ENCODE measurements at regions of chr9 and their contacts with region 1.

Region 1: DNA sequence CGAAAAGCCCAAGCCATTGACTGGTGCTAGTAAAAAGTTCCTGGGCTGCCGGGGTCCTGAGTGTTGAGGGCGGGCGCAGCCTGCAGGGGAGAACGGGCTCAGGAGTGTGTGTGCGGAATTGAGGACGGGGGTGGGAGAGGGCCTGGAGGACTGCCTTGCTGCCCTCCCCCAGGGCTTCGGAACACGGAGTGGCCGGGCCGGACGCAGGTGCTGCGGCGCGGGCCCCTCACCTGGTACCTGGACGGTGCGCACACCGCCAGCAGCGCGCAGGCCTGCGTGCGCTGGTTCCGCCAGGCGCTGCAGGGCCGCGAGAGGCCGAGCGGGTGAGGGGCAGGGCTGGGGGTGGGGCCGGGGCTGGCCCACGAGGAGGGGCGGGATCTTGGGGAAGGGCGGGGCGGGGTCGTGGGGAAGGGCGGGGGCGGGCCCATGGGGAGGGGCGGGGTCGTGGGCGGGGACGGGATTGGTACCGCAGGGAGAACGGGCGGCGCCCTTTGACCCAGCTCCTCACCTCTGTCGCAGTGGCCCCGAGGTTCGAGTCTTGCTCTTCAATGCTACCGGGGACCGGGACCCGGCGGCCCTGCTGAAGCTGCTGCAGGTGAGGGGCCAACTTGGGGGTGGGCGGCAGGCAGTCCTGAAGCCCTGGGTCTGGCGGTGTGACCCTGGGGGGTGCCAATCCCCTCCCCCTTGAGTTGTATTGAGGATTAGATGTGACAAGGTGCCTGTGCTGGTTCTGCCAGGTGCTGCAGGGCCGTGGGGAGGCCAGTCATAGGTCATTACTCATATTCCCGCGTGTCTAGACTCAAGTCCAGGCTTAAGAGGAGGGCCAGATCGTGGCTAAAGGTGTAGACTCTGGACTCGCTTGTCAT is 7.1 kb downstream of the FPGS start:
- DNase-seq: peak; percentile 75 to 86 (median 84)
- ATAC-seq: peak; percentile 69 to 88 (median 83)
- H3K4me3 ChIP-seq: peak overlapping the region in 2 of 3 donors; percentile 38 to 39
- H3K27ac ChIP-seq: peak overlapping the region in 2 of 3 donors; percentile 10 to 62
- H3K4me1 ChIP-seq: peaks cover 0 to 22% (median 9%) of the 10 kb centered on the region in 4 donors
- H3K27me3 ChIP-seq: no peaks in the 10 kb centered on the region
- CTCF ChIP-seq: no peak
- POLR2A ChIP-seq: peak; percentile 11

Region 2: GRCh38 chr9:127869310-127870152 is 59.8 kb after region 1 on chr9:
- intact Hi-C with region 1: loop called in 1 of 2 experiments (anchors 10 kb)
- DNase-seq: peak; percentile 86 to 91 (median 90)
- ATAC-seq: peak; percentile 83 to 92 (median 86)
- H3K4me3 ChIP-seq: no peak overlapping the region
- H3K27ac ChIP-seq: no peak overlapping the region
- H3K4me1 ChIP-seq: peaks cover 0 to 13% (median 6%) of the 10 kb centered on the region in 4 donors
- H3K27me3 ChIP-seq: no peaks in the 10 kb centered on the region
- CTCF ChIP-seq: peak; percentile 83 to 94 (median 86)
- POLR2A ChIP-seq: no peak

Region 3: DNA sequence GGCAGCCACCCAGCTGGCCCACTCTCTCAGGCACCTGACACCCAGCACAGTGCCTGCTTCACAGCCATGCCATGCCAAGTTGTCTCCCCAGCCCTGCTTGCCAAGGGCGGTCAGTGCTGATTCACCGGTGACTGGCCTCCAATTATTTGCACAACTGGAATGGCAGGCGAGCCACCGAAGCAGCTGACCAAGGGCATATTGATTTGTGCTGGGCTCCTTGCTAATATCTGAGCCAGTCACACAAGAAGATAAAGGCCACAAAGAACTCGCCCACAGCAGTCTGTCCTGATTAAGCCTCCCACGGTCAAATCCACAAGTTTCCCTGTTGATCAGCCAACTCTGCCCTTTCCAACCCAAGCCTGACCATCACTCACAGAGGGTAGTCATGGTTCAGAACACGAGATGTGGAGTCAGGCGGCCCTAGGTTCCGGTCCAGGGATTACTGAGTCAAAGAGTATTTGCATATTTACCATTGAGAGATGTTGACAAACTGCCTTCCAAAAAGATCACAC is 177.4 kb after region 1 on chr9:
- intact Hi-C with region 1: no loop called
- DNase-seq: peak; percentile 90 to 97 (median 95)
- ATAC-seq: peak; percentile 75 to 81 (median 80)
- H3K4me3 ChIP-seq: no peak overlapping the region
- H3K27ac ChIP-seq: peak overlapping the region; percentile 35 to 61 (median 44)
- H3K4me1 ChIP-seq: peaks cover 0 to 53% (median 26%) of the 10 kb centered on the region in 4 donors
- H3K27me3 ChIP-seq: no peaks in the 10 kb centered on the region
- CTCF ChIP-seq: no peak
- POLR2A ChIP-seq: peak; percentile 14

Measured in right lobe of liver (tissue), 6 donors.